Uterus (tissue), 4 donors: ENCODE measurements at regions of chr17 and their contacts with region 1.

Region 1: GRCh38 chr17:11182430-11182829 is 58.6 kb upstream of the SHISA6 start:
- DNase-seq: no peak
- H3K4me3 ChIP-seq: no peak overlapping the region
- H3K27ac ChIP-seq: no peak overlapping the region
- H3K4me1 ChIP-seq: no peaks in the 10 kb centered on the region
- H3K27me3 ChIP-seq: no peaks in the 10 kb centered on the region
- CTCF ChIP-seq: no peak
- POLR2A ChIP-seq: no peak

Region 2: DNA sequence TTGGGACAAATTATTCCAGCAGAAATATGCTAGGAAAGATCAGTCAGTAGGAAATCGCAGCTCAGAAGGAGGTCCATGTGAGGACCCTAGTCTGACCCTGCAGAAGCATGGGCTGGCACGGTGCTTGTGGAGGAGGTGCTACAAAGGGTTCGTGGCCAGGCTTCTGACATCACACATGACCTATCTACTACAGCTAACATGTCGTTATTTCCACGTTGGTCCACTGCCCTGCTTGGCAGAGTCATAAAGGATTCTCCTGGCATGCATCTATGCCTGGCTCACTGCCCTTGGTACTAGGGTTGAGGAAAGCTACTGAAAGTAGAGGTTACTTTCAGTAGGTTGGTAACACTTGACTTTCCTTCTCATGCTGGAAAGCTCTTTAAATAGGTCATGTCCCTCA is 59.5 kb before region 1 on chr17:
- intact Hi-C with region 1: loop called (anchors 10 kb)
- DNase-seq: peak in 1 of 2 donors; percentile 32
- H3K4me3 ChIP-seq: no peak overlapping the region
- H3K27ac ChIP-seq: no peak overlapping the region
- H3K4me1 ChIP-seq: no peaks in the 10 kb centered on the region
- H3K27me3 ChIP-seq: no peaks in the 10 kb centered on the region
- CTCF ChIP-seq: no peak
- POLR2A ChIP-seq: no peak

Region 3: GRCh38 chr17:11240041-11240801 is 57.8 kb after region 1 on chr17:
- intact Hi-C with region 1: no loop called
- DNase-seq: no peak
- H3K4me3 ChIP-seq: peak overlapping the region; percentile 20 to 35
- H3K27ac ChIP-seq: peak overlapping the region in 1 of 2 donors; percentile 5
- H3K4me1 ChIP-seq: no peaks in the 10 kb centered on the region
- H3K27me3 ChIP-seq: peaks cover 0 to 3% of the 10 kb centered on the region in 2 donors
- CTCF ChIP-seq: peak in 3 of 4 experiments; percentile 20 to 50 (median 27)
- POLR2A ChIP-seq: peak in 1 of 2 donors; percentile 11